ENCODE measurements at regions of chr2 and their contacts with region 1.

Region 1: DNA sequence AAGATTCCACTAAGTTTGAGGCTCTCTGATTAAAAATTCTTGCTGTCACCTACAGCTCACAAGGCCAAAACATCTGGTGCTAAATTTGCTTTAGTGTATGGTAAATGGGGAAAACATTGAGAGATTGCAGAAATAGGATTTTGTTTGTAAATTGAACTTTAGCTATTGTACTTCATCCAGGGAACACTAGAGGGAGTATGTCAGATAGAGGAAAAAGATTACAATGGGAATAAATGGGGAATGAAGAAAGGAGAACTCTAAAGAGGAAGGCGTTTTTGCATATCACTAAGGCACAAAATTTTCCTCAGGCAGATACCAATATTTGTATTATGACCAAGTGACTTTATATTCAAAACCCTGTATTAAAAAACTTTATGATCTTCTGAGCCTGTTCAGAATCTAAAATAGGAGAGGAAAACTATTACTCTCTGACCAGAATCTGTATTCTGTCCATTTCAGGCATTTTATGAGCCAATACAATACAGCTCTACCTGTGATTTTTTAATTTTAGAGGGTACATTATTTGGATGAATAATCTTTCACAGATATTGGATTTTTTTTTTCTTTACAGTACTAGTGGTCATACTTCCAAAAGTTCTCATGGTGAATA is 52.3 kb upstream of the ITGB6 start:
- DNase-seq: peak; percentile 55
- H3K27ac ChIP-seq: no peak overlapping the region
- CTCF ChIP-seq: peak; percentile 82

Region 2: DNA sequence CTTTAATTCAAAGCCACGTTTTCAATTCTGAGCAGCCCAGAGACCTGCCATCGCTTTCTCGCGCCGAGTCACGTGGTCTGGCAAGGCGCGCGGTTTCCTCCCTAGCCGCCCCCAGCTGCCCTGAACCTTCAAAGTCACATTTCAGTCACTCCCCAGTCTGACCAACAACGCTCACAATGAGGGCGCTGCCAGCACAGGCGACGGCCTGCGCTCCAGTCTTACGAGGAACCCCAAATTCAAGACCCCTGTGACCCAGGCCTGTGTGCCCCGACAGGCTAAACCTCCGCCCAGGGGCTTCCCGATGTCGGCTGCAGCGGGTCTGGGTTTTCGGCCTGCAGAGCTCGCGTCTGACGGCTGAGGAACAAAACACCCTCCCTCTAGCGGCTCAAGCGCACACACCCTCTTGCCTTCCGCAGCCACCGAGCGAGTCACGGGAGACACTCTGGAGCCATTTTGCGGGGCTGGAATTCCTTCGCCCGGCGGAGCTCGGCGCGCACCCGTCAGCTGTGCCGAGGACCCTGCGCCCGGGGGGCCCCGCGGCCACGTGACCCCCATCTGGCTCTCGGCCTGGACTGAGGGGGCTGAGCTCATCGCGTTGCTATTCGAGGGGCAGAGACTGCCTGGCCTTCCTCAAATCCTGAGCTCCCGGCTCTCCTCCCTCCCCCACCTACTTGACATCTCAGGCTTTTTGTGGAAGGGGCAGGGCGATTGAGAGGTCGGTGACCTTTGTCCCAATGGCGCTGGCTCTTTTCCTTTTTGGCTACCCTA is 17.6 kb after region 1 on chr2:
- CTCF ChIA-PET with region 1: interaction called, 14 read pairs
- POLR2A ChIA-PET with region 1: no interaction called
- DNase-seq: peak; percentile 62
- H3K27ac ChIP-seq: peak overlapping the region; percentile 33
- CTCF ChIP-seq: no peak

Measured in RWPE1 (cell line).